ENCODE measurements at regions of chr22 and their contacts with region 1.

Region 1: GRCh38 chr22:27218012-27218920 is 560.9 kb downstream of the MIAT start:
- DNase-seq: no peak
- H3K4me3 ChIP-seq: no peak overlapping the region
- H3K27ac ChIP-seq: peak overlapping the region in 2 of 4 donors; percentile 21 to 22
- H3K4me1 ChIP-seq: peaks cover 0 to under 1% (median under 1%) of the 10 kb centered on the region in 4 donors
- H3K27me3 ChIP-seq: peaks cover 3% of the 10 kb centered on the region
- CTCF ChIP-seq: no peak
- EP300 ChIP-seq: no peak
- POLR2A ChIP-seq: no peak

Region 2: GRCh38 chr22:26672590-26673468 is 545.4 kb before region 1 on chr22:
- in situ Hi-C with region 1: no loop called
- intact Hi-C with region 1: no loop called
- DNase-seq: peak; percentile 95
- H3K4me3 ChIP-seq: peak overlapping the region; percentile 58 to 86 (median 70)
- H3K27ac ChIP-seq: peak overlapping the region; percentile 92 to 97 (median 96)
- H3K4me1 ChIP-seq: peaks cover 9 to 30% (median 23%) of the 10 kb centered on the region in 4 donors
- H3K27me3 ChIP-seq: no peaks in the 10 kb centered on the region
- CTCF ChIP-seq: peak; percentile 40 to 70 (median 48)
- EP300 ChIP-seq: peak; percentile 3
- POLR2A ChIP-seq: peak; percentile 66

Region 3: DNA sequence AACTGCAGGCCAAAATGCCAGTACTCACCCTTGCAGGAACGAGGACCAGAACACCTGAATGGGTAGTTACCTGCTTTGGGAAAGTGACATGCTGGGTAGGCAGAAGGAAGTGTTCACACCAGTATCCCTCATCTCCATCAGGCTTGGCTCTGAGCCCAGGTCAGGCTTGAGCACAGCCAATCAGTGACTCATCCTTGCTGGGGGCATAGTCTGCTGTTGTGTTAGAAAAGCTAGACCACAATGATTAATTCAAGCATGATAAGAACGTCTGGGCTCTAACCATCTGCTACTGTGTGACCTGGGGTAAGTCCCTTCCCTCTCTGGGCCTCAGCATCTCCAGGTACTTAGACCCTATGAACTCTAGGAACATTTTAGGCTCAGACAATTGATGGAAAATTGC is 110.4 kb before region 1 on chr22:
- in situ Hi-C with region 1: loop called in 1 of 4 experiments (anchors 25 kb)
- intact Hi-C with region 1: loop called (anchors 5 kb)
- DNase-seq: peak; percentile 45
- H3K4me3 ChIP-seq: no peak overlapping the region
- H3K27ac ChIP-seq: peak overlapping the region; percentile 36 to 83 (median 67)
- H3K4me1 ChIP-seq: peaks cover 10 to 26% (median 14%) of the 10 kb centered on the region in 4 donors
- H3K27me3 ChIP-seq: no peaks in the 10 kb centered on the region
- CTCF ChIP-seq: no peak
- EP300 ChIP-seq: no peak
- POLR2A ChIP-seq: no peak

Region 4: GRCh38 chr22:27150544-27150941 is 67.7 kb before region 1 on chr22:
- in situ Hi-C with region 1: no loop called
- intact Hi-C with region 1: no loop called
- DNase-seq: no peak
- H3K4me3 ChIP-seq: no peak overlapping the region
- H3K27ac ChIP-seq: no peak overlapping the region
- H3K4me1 ChIP-seq: no peaks in the 10 kb centered on the region
- H3K27me3 ChIP-seq: peaks cover 12% of the 10 kb centered on the region
- CTCF ChIP-seq: no peak
- EP300 ChIP-seq: no peak
- POLR2A ChIP-seq: no peak

Measured in transverse colon (tissue), 4 donors.